OCI-LY7 (cell line): ENCODE measurements at regions of chr4 and their contacts with region 1.

Region 1: DNA sequence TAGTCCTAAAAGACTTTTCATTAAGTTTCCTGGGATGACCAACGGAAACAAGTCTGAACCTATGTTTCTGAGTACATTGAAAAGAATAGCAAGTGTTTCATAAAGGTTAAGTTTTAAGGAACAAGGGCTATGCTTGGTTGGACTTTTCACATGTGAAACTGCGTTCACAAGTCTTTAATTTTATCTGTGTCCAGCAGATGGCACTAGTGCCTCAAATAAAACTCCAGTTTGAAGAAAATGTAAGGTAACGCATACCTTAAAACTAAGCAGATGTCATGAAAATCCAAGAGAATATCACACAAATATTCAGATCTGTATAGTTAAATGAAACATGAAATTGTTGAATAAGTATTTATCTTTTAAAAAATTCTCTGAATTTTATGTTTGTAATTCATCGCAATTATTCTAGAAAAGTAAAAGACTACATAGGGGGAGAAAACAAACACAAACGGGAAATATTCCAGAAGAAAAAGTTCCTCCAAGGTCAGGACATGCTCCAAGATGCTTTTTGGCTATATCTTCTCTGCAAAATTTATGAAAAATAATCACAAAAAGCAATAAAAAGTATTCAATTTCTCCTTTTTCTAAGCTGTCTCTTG is 89.6 kb upstream of the MAD2L1 start:
- DNase-seq: peak; percentile 81
- H3K4me3 ChIP-seq: no peak overlapping the region
- H3K27ac ChIP-seq: no peak overlapping the region
- H3K4me1 ChIP-seq: peaks cover 5% of the 10 kb centered on the region
- CTCF ChIP-seq: peak; percentile 91

Region 2: GRCh38 chr4:119894650-119895208 is 261.5 kb before region 1 on chr4:
- CTCF ChIA-PET with region 1: no interaction called
- POLR2A ChIA-PET with region 1: no interaction called
- intact Hi-C with region 1: no loop called
- DNase-seq: no peak
- H3K4me3 ChIP-seq: no peak overlapping the region
- H3K27ac ChIP-seq: no peak overlapping the region
- H3K4me1 ChIP-seq: no peaks in the 10 kb centered on the region
- CTCF ChIP-seq: no peak

Region 3: GRCh38 chr4:120066517-120067340 is 89.5 kb before region 1 on chr4 and contains the start of gene MAD2L1:
- CTCF ChIA-PET with region 1: no interaction called
- POLR2A ChIA-PET with region 1: no interaction called
- intact Hi-C with region 1: loop called (anchors 1 kb)
- DNase-seq: peak; percentile 98
- H3K4me3 ChIP-seq: peak within 1 kb of the TSS; percentile 85
- H3K27ac ChIP-seq: peak within 1 kb of the TSS; percentile 92
- H3K4me1 ChIP-seq: peaks cover 60% of the 10 kb centered on the region
- CTCF ChIP-seq: no peak
- total RNA-seq, gene MAD2L1: 69.3 and 109 TPM in 2 replicates

Region 4: GRCh38 chr4:120809518-120809917 is 653.3 kb after region 1 on chr4:
- CTCF ChIA-PET with region 1: no interaction called
- POLR2A ChIA-PET with region 1: interaction called, 3 read pairs
- intact Hi-C with region 1: loop called (anchors 5 kb)
- DNase-seq: peak; percentile 24
- H3K4me3 ChIP-seq: no peak overlapping the region
- H3K27ac ChIP-seq: no peak overlapping the region
- H3K4me1 ChIP-seq: no peaks in the 10 kb centered on the region
- CTCF ChIP-seq: peak; percentile 84

Region 5: GRCh38 chr4:121096629-121097028 is 940.4 kb after region 1 on chr4:
- CTCF ChIA-PET with region 1: no interaction called
- POLR2A ChIA-PET with region 1: interaction called, 4 read pairs
- intact Hi-C with region 1: loop called (anchors 1 kb)
- DNase-seq: peak; percentile 37
- H3K4me3 ChIP-seq: no peak overlapping the region
- H3K27ac ChIP-seq: no peak overlapping the region
- H3K4me1 ChIP-seq: no peaks in the 10 kb centered on the region
- CTCF ChIP-seq: peak; percentile 83

Region 6: GRCh38 chr4:121252224-121252806 is 1096.1 kb after region 1 on chr4:
- CTCF ChIA-PET with region 1: no interaction called
- POLR2A ChIA-PET with region 1: no interaction called
- intact Hi-C with region 1: loop called (anchors 2 kb)
- DNase-seq: peak; percentile 59
- H3K4me3 ChIP-seq: no peak overlapping the region
- H3K27ac ChIP-seq: no peak overlapping the region
- H3K4me1 ChIP-seq: no peaks in the 10 kb centered on the region
- CTCF ChIP-seq: peak; percentile 95